Tibial artery (tissue), 4 donors: ENCODE measurements at regions of chr18 and their contacts with region 1.

Region 1: DNA sequence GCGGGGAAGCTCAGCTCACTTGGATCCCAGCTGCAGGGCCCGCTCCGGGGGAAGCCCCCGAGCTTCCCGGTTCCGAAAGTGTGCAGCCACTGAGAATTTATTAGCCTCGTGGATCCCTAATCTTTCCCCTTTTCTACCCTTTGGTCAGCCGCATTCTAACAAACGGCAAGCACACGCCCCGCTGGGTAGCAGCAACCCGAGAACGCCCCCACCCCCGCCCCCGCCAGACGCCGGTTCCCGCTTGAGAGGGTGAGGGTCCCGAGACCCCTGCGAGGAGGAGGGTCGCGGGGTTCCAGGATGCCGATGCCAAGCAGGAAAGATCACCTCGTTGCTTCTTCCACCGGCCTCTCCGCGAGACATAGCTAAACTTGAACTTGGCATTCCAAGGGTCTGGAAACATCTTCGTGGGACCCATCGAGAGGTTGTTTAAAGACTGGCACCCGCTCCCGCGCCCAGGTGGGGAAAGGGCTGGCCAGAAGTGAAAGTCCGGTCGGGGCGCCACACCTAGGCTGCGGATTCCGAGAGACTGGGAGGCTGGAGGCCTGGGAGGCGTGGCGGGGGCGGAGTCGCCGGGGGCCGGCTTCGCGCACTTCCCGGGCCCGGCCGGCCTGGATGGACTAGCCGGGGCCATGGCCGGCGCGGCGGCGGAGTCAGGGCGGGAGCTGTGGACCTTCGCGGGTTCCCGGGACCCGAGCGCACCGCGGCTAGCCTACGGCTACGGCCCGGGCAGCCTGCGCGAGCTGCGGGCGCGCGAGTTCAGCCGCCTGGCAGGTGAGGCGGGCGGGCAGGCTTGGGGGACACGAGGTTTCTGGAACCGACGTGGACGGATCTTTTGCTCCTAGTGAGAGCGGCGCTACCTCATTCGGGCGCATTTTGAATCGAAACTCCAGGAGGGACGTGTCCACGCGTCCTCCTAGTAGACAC is at the start of gene MOCOS:
- DNase-seq: peak; percentile 68 to 89
- H3K4me3 ChIP-seq: peak within 1 kb of the TSS; percentile 56 to 66
- H3K27ac ChIP-seq: peak within 1 kb of the TSS; percentile 17 to 40
- H3K4me1 ChIP-seq: peaks cover 0 to 23% (median 14%) of the 10 kb centered on the region in 4 donors
- H3K27me3 ChIP-seq: no peaks in the 10 kb centered on the region
- CTCF ChIP-seq: no peak

Region 2: DNA sequence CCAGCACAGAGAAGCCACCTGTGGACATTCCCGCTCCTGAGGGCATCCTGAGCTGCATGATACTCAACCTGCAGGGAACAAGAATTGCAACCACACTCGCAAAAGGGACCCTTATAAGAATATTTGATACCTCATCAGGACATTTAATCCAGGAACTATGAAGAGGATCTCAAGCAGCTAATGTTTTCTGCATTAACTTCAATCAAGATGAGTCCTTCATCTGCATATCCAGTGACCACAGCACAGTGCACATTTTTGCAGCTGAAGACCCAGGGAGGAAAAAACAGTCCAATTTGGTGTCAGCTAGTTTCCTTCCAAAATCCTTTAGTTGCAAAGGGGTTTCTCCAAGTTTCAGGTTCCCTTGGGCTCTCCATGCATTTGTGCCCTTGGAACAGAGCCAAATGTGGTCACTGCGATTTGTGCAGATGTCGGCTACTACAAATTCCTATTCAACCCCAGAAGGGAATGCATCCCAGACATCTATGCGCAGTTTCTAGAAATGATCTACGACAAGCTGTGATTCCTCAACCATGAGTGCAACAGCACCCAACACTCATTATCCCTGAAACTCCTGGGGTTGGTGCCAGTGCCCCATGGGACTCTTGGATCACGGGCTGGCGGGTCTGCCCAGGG is 87.0 kb after region 1 on chr18:
- intact Hi-C with region 1: loop called (anchors 10 kb)
- DNase-seq: no peak
- H3K4me3 ChIP-seq: no peak overlapping the region
- H3K27ac ChIP-seq: no peak overlapping the region
- H3K4me1 ChIP-seq: no peaks in the 10 kb centered on the region
- H3K27me3 ChIP-seq: peaks cover 0 to 6% of the 10 kb centered on the region in 2 donors
- CTCF ChIP-seq: no peak